CD8-positive, alpha-beta T cell (primary cell): ENCODE measurements at regions of chr5 and their contacts with region 1.

Region 1: DNA sequence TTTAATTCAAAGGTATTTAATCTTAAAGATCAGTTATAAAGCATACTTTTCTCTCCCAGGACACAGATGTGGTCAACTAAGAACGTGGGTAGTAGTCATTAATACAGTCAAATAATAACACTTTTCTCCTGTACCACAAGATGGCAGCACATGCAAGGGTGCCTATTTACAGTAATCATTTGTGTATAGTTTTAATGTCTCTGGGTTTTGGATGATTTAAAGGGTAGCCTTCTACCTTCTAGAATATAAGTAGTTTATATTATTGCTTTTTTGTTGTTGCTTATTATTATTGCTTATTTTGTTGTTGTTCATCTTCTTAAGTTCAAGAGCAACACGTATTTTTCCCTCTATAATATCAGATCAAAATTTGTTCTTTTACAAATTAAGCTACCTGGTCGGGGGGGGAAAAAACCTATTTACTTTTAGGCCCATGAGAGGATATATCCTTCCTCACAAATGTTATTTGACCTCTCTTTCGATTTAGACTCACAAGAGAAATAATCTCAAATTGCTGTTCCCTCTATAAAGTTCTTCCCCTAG is 59.6 kb upstream of the SLC27A6 start:
- DNase-seq: peak in 4 of 9 experiments; percentile 19 to 65 (median 39)
- ATAC-seq: no peak
- H3K4me3 ChIP-seq: no peak overlapping the region
- H3K4me3 Mint-ChIP-seq: no peak overlapping the region
- H3K27ac ChIP-seq: no peak overlapping the region
- H3K27ac Mint-ChIP-seq: no peak overlapping the region
- H3K4me1 ChIP-seq: no peaks in the 10 kb centered on the region
- H3K4me1 Mint-ChIP-seq: no peaks in the 10 kb centered on the region
- H3K27me3 ChIP-seq: no peaks in the 10 kb centered on the region
- H3K27me3 Mint-ChIP-seq: no peaks in the 10 kb centered on the region
- CTCF ChIP-seq: peak; percentile 88

Region 2: GRCh38 chr5:127564002-127564769 is 1341.5 kb before region 1 on chr5:
- CTCF ChIA-PET with region 1: no interaction called
- POLR2A ChIA-PET with region 1: no interaction called
- intact Hi-C with region 1: loop called in 1 of 2 experiments (anchors 10 kb)
- DNase-seq: peak in 7 of 9 experiments; percentile 12 to 77 (median 51)
- ATAC-seq: peak; percentile 72
- H3K4me3 ChIP-seq: no peak overlapping the region
- H3K4me3 Mint-ChIP-seq: no peak overlapping the region
- H3K27ac ChIP-seq: no peak overlapping the region
- H3K27ac Mint-ChIP-seq: no peak overlapping the region
- H3K4me1 ChIP-seq: no peaks in the 10 kb centered on the region
- H3K4me1 Mint-ChIP-seq: peaks cover 6% of the 10 kb centered on the region
- H3K27me3 ChIP-seq: no peaks in the 10 kb centered on the region
- H3K27me3 Mint-ChIP-seq: peaks cover 6% of the 10 kb centered on the region
- CTCF ChIP-seq: peak; percentile 71

Region 3: GRCh38 chr5:129094087-129094923 is 188.7 kb after region 1 on chr5 and contains the start of gene ISOC1:
- CTCF ChIA-PET with region 1: interaction called, 4 read pairs
- POLR2A ChIA-PET with region 1: no interaction called
- intact Hi-C with region 1: loop called in 1 of 2 experiments (anchors 1 kb)
- DNase-seq: peak; percentile 83 to 97 (median 90)
- ATAC-seq: peak; percentile 91
- H3K4me3 ChIP-seq: peak within 1 kb of the TSS; percentile 86 to 88
- H3K4me3 Mint-ChIP-seq: peak within 1 kb of the TSS; percentile 91
- H3K27ac ChIP-seq: peak within 1 kb of the TSS; percentile 74
- H3K27ac Mint-ChIP-seq: peak within 1 kb of the TSS; percentile 86
- H3K4me1 ChIP-seq: peaks cover 35% of the 10 kb centered on the region
- H3K4me1 Mint-ChIP-seq: peaks cover 37% of the 10 kb centered on the region
- H3K27me3 ChIP-seq: no peaks in the 10 kb centered on the region
- H3K27me3 Mint-ChIP-seq: peaks cover 15% of the 10 kb centered on the region
- CTCF ChIP-seq: peak; percentile 41
- total RNA-seq, gene ISOC1: 9.7 to 9.8 TPM

Region 4: DNA sequence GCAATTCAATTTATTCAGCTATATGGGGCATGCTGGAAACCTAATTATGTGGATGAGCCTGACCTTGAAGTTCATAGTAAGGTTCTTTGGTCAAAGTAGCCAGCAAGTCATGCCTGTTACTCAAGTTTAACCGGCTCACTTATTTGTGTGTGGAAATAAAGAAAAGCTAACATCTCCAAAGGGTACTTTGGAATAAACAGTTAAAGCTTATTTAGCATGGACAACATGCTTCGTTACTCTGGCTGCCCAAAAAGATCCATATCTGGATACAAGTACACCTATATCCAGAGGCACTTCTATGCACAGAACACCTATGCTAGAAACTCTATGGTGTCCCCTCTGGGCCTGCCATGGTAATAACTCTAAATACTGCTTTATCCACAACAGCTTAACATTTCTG is 223.5 kb after region 1 on chr5:
- CTCF ChIA-PET with region 1: interaction called, 4 read pairs
- POLR2A ChIA-PET with region 1: no interaction called
- intact Hi-C with region 1: loop called in 1 of 2 experiments (anchors 2 kb)
- DNase-seq: no peak
- ATAC-seq: no peak
- H3K4me3 ChIP-seq: no peak overlapping the region
- H3K4me3 Mint-ChIP-seq: no peak overlapping the region
- H3K27ac ChIP-seq: no peak overlapping the region
- H3K27ac Mint-ChIP-seq: no peak overlapping the region
- H3K4me1 ChIP-seq: peaks cover 3% of the 10 kb centered on the region
- H3K4me1 Mint-ChIP-seq: peaks cover 10% of the 10 kb centered on the region
- H3K27me3 ChIP-seq: no peaks in the 10 kb centered on the region
- H3K27me3 Mint-ChIP-seq: peaks cover 2% of the 10 kb centered on the region
- CTCF ChIP-seq: no peak

Region 5: GRCh38 chr5:129135633-129136032 is 230.0 kb after region 1 on chr5:
- CTCF ChIA-PET with region 1: interaction called, 3 read pairs
- POLR2A ChIA-PET with region 1: no interaction called
- intact Hi-C with region 1: loop called in 1 of 2 experiments (anchors 2 kb)
- DNase-seq: peak in 2 of 9 experiments; percentile 15 to 40
- ATAC-seq: no peak
- H3K4me3 ChIP-seq: no peak overlapping the region
- H3K4me3 Mint-ChIP-seq: no peak overlapping the region
- H3K27ac ChIP-seq: no peak overlapping the region
- H3K27ac Mint-ChIP-seq: no peak overlapping the region
- H3K4me1 ChIP-seq: no peaks in the 10 kb centered on the region
- H3K4me1 Mint-ChIP-seq: no peaks in the 10 kb centered on the region
- H3K27me3 ChIP-seq: no peaks in the 10 kb centered on the region
- H3K27me3 Mint-ChIP-seq: peaks cover 2% of the 10 kb centered on the region
- CTCF ChIP-seq: no peak

Region 6: DNA sequence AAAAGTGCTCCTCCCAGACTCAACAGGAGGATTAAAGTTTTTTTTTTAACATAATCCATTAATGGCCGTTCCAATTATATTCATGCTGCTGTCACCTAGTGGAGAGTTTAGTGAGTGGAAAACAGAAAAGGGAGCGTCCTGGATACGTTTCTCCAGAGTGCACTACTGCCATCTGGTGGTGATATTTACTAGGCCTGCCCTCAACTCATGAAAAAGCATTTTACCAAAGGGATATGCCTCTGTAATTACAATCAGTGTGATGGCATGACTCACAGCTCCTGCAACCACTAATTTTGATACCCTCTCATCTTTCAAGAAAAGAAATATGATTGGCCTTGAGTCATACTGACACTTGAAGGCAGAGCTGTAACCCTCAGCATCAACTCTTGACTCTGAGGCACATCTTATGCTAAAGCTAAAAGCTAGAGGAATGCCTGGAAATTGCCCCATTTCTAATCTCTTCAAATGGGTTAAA is 862.3 kb after region 1 on chr5:
- CTCF ChIA-PET with region 1: interaction called, 11 read pairs
- POLR2A ChIA-PET with region 1: no interaction called
- intact Hi-C with region 1: loop called (anchors 1 kb)
- DNase-seq: peak in 8 of 9 experiments; percentile 1 to 75 (median 42)
- ATAC-seq: peak; percentile 64
- H3K4me3 ChIP-seq: no peak overlapping the region
- H3K4me3 Mint-ChIP-seq: no peak overlapping the region
- H3K27ac ChIP-seq: no peak overlapping the region
- H3K27ac Mint-ChIP-seq: no peak overlapping the region
- H3K4me1 ChIP-seq: no peaks in the 10 kb centered on the region
- H3K4me1 Mint-ChIP-seq: peaks cover 2% of the 10 kb centered on the region
- H3K27me3 ChIP-seq: no peaks in the 10 kb centered on the region
- H3K27me3 Mint-ChIP-seq: peaks cover 6% of the 10 kb centered on the region
- CTCF ChIP-seq: peak; percentile 90

Region 7: DNA sequence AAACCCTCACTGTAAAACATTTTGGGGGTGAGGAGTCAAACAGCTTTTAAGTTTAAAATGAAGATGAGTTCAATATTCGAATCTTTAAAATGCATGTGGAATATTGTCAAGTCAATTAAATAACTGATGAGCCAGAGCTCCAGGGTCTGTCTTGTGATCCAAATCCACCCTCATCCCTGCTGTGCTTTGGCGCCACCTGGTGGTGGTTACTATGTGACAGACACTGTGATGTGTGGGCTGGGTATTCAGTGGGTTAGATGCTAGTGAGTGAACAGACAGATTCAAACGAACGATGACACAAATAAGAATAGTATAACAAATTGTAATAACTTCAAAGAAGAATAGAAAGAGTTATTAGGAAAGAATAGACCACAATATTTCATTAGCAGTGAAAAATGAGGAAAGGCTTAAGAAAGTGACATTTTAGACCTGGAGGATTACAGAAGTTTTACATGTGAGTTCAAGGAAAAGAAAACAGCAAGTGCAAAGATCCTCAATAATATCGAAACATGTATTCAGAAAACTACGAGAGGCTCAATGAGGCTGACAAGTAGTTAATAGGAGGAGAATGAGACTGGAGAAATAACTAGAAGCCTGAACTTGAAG is 947.2 kb after region 1 on chr5:
- CTCF ChIA-PET with region 1: no interaction called
- POLR2A ChIA-PET with region 1: no interaction called
- intact Hi-C with region 1: loop called (anchors 1 to 2 kb)
- DNase-seq: peak; percentile 27 to 73 (median 61)
- ATAC-seq: peak; percentile 48
- H3K4me3 ChIP-seq: no peak overlapping the region
- H3K4me3 Mint-ChIP-seq: no peak overlapping the region
- H3K27ac ChIP-seq: no peak overlapping the region
- H3K27ac Mint-ChIP-seq: no peak overlapping the region
- H3K4me1 ChIP-seq: no peaks in the 10 kb centered on the region
- H3K4me1 Mint-ChIP-seq: no peaks in the 10 kb centered on the region
- H3K27me3 ChIP-seq: no peaks in the 10 kb centered on the region
- H3K27me3 Mint-ChIP-seq: peaks cover 8% of the 10 kb centered on the region
- CTCF ChIP-seq: peak; percentile 95